T-cell (primary cell): ENCODE measurements at regions of chr1 and their contacts with region 1.

Region 1: GRCh38 chr1:11248155-11248554 is 14.2 kb downstream of the MTOR start:
- DNase-seq: no peak
- ATAC-seq: no peak
- H3K4me3 ChIP-seq: no peak overlapping the region
- H3K4me3 Mint-ChIP-seq: no peak overlapping the region
- H3K27ac ChIP-seq: no peak overlapping the region
- H3K27ac Mint-ChIP-seq: peak overlapping the region; percentile 17 to 88
- H3K4me1 ChIP-seq: peaks cover 0 to 24% of the 10 kb centered on the region in 2 experiments
- H3K4me1 Mint-ChIP-seq: peaks cover 15 to 26% (median 20%) of the 10 kb centered on the region in 3 donors
- H3K27me3 ChIP-seq: no peaks in the 10 kb centered on the region
- H3K27me3 Mint-ChIP-seq: no peaks in the 10 kb centered on the region

Region 2: GRCh38 chr1:11180342-11180744 is 67.8 kb before region 1 on chr1:
- CTCF ChIA-PET with region 1: interaction called in 1 of 2 experiments, 13 read pairs
- POLR2A ChIA-PET with region 1: no interaction called
- DNase-seq: no peak
- ATAC-seq: no peak
- H3K4me3 ChIP-seq: no peak overlapping the region
- H3K4me3 Mint-ChIP-seq: no peak overlapping the region
- H3K27ac ChIP-seq: no peak overlapping the region
- H3K27ac Mint-ChIP-seq: no peak overlapping the region
- H3K4me1 ChIP-seq: no peaks in the 10 kb centered on the region
- H3K4me1 Mint-ChIP-seq: no peaks in the 10 kb centered on the region
- H3K27me3 ChIP-seq: no peaks in the 10 kb centered on the region
- H3K27me3 Mint-ChIP-seq: no peaks in the 10 kb centered on the region

Region 3: GRCh38 chr1:11645670-11646265 is 397.6 kb after region 1 on chr1:
- CTCF ChIA-PET with region 1: interaction called, 21 to 24 read pairs
- POLR2A ChIA-PET with region 1: no interaction called
- DNase-seq: peak; percentile 54 to 85 (median 74)
- ATAC-seq: peak; percentile 43 to 59 (median 52)
- H3K4me3 ChIP-seq: no peak overlapping the region
- H3K4me3 Mint-ChIP-seq: no peak overlapping the region
- H3K27ac ChIP-seq: no peak overlapping the region
- H3K27ac Mint-ChIP-seq: no peak overlapping the region
- H3K4me1 ChIP-seq: peaks cover 2 to 22% of the 10 kb centered on the region in 2 experiments
- H3K4me1 Mint-ChIP-seq: peaks cover 11 to 20% (median 15%) of the 10 kb centered on the region in 3 donors
- H3K27me3 ChIP-seq: peaks cover 0 to 22% of the 10 kb centered on the region in 2 experiments
- H3K27me3 Mint-ChIP-seq: no peaks in the 10 kb centered on the region

Region 4: GRCh38 chr1:12631571-12631970 is 1383.4 kb after region 1 on chr1:
- CTCF ChIA-PET with region 1: no interaction called
- POLR2A ChIA-PET with region 1: interaction called in 1 of 2 experiments, 13 read pairs
- DNase-seq: no peak
- ATAC-seq: no peak
- H3K4me3 ChIP-seq: no peak overlapping the region
- H3K4me3 Mint-ChIP-seq: no peak overlapping the region
- H3K27ac ChIP-seq: no peak overlapping the region
- H3K27ac Mint-ChIP-seq: no peak overlapping the region
- H3K4me1 ChIP-seq: peaks cover 3 to 6% of the 10 kb centered on the region in 2 experiments
- H3K4me1 Mint-ChIP-seq: peaks cover 13 to 20% (median 15%) of the 10 kb centered on the region in 3 donors
- H3K27me3 ChIP-seq: peaks cover 0 to 46% of the 10 kb centered on the region in 2 experiments
- H3K27me3 Mint-ChIP-seq: peaks cover 5 to 9% of the 10 kb centered on the region in 2 donors